HCT116 (cell line): ENCODE measurements at regions of chr2 and their contacts with region 1.

Region 1: DNA sequence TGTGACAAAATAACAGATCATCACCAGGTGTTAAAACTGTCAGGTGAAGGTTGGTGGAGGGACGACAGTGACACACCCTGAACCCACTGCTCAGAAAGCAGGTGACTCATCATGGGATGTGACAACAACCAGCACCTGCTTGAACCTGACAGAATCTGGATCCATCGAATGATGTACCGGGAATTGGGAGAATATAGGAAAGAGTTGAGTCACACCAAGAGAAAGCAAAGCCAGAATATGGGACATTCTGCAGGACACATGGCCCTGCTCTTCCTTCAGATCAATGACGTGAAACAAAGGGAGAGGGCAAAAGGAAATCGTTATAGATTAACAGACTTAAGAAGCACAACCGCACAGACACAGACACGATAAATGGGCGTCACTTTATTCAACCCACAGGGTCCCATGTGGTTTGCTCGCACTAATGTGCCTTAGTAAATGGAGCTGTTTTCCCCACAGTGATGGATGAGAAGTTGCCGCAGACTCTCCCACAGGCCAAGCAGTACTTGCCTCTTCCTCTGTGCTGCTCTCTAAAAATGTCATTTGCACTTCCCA is 100.1 kb downstream of the CRACDL start:
- DNase-seq: no peak
- ATAC-seq: no peak
- H3K4me3 ChIP-seq: no peak overlapping the region
- H3K27ac ChIP-seq: no peak overlapping the region
- H3K4me1 ChIP-seq: no peaks in the 10 kb centered on the region
- H3K27me3 ChIP-seq: no peaks in the 10 kb centered on the region
- CTCF ChIP-seq: no peak
- POLR2A ChIP-seq: no peak
- RAD21 ChIP-seq: no peak

Region 2: DNA sequence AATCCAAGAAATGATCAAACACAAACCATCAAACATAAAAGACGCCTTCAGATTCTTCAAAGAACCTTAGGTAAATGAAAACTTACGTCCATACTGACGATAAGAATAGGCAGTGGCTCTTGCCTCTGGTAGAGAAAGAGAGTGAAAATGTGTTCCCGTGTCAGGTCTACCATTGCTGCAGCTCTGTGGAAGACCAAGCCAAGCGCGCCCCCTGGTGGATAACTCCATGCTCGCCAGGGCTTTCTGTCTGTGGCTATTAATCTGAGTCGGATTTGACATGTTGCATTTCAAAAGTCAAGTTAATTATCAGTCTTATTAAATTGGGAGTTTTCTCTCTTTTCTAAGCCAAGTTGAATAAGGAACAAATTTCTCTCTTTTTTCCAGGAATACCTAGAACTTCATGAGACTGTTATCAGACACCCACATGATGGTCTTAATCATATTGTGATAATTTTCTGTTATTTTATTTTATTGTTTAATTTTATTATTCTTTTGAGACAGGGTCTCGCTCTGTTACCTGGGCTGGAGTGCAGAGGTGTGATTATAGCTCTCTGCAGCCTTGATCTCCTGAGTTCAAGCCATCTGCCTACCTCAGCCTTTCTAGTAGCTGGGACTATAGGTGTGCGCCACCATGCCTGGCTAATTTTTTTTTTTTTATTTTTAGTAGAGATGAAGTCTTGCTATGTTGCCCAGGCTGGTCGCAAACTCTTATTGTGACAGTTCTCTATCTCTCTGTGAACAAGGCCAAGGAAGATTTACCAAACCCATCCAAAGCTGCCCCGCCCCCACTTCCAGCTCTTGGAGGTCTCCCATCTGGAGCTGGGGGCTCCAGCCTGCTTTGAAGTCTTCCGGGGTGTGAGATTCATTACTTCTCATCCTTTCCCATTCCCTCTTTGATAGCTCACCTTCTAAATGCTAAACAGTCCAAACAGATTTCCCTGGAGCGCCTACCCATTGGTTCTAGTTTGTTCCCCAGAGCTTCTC is 1138.4 kb before region 1 on chr2:
- CTCF ChIA-PET with region 1: interaction called, 3 read pairs
- POLR2A ChIA-PET with region 1: no interaction called
- RAD21 ChIA-PET with region 1: no interaction called
- intact Hi-C with region 1: loop called (anchors 2 kb)
- DNase-seq: peak; percentile 71
- ATAC-seq: peak; percentile 85
- H3K4me3 ChIP-seq: no peak overlapping the region
- H3K27ac ChIP-seq: no peak overlapping the region
- H3K4me1 ChIP-seq: peaks cover 0 to 5% of the 10 kb centered on the region in 2 experiments; a peak in 1 of 4 replicates
- H3K27me3 ChIP-seq: no peaks in the 10 kb centered on the region
- CTCF ChIP-seq: peak; percentile 85 to 99 (median 92)
- POLR2A ChIP-seq: no peak
- RAD21 ChIP-seq: peak; percentile 100

Region 3: DNA sequence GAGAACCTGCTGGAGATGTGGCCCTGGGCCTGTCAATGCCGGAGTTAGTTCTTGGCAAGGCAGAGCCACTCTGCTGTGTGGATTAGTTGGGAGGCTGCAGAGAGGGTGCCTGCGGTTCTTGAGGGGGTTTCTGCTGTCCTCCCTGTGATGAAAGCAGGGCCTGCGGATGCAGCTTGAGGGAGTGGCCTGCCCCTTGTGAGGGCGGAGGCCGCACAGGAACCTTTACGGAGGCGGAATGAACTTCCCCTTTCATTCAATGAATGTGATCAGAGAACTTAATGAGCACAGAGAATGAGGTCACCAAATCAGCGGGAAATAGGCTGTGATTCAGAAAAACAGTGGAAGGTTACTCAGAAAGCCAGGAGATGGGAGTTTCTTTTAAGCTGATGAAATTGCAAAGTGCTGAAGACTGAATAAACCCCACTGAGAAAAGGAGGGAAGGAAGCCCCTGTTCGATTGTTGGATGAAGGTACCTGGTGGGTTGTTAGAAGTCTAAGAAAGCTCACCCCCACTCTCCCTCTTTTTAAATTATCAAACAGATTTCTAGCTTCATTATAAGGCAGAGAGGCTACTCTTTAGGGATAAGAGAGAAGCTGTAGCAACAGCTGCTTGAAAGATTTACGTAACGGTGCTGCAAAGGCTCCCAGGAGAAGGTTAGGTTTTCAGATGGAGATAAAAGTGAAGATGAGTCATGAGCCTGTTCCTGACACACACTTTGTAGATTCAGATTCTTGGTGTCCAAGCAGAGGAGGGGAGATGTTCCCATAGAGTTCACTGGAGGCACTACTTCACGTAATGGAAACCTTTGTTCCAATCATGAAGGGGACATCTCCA is 701.5 kb before region 1 on chr2:
- CTCF ChIA-PET with region 1: no interaction called
- POLR2A ChIA-PET with region 1: no interaction called
- RAD21 ChIA-PET with region 1: no interaction called
- intact Hi-C with region 1: no loop called
- DNase-seq: no peak
- ATAC-seq: no peak
- H3K4me3 ChIP-seq: no peak overlapping the region
- H3K27ac ChIP-seq: no peak overlapping the region
- H3K4me1 ChIP-seq: no peaks in the 10 kb centered on the region
- H3K27me3 ChIP-seq: no peaks in the 10 kb centered on the region
- CTCF ChIP-seq: no peak
- POLR2A ChIP-seq: no peak
- RAD21 ChIP-seq: no peak

Region 4: GRCh38 chr2:98412751-98413458 is 423.0 kb before region 1 on chr2:
- CTCF ChIA-PET with region 1: no interaction called
- POLR2A ChIA-PET with region 1: no interaction called
- RAD21 ChIA-PET with region 1: no interaction called
- intact Hi-C with region 1: loop called (anchors 2 kb)
- DNase-seq: peak; percentile 53
- ATAC-seq: peak; percentile 96
- H3K4me3 ChIP-seq: no peak overlapping the region
- H3K27ac ChIP-seq: no peak overlapping the region
- H3K4me1 ChIP-seq: peaks cover 0 to 3% of the 10 kb centered on the region in 2 experiments; a peak in 1 of 4 replicates
- H3K27me3 ChIP-seq: no peaks in the 10 kb centered on the region
- CTCF ChIP-seq: peak; percentile 70 to 76 (median 74); a peak in 5 of 6 replicates
- POLR2A ChIP-seq: no peak
- RAD21 ChIP-seq: peak; percentile 75

Region 5: DNA sequence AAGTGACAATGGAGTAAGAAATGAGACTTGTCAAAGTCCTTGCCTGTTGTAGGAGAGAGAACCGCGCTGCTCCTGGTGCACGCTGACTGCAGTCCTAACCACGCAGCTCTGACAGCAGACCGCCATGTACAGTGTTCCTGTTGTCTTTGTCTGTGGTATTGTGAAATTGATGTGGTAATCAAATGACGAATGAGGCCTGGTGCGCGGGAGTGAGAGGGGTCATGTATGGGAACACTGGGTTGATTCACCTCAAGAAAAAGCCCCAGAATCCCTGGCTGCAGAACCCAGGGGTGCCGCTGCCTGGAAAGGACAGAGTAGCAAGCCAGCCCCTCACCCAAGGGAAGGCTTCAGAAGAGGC is 327.2 kb before region 1 on chr2:
- CTCF ChIA-PET with region 1: no interaction called
- POLR2A ChIA-PET with region 1: no interaction called
- RAD21 ChIA-PET with region 1: no interaction called
- intact Hi-C with region 1: no loop called
- DNase-seq: no peak
- ATAC-seq: no peak
- H3K4me3 ChIP-seq: no peak overlapping the region
- H3K27ac ChIP-seq: no peak overlapping the region
- H3K4me1 ChIP-seq: no peaks in the 10 kb centered on the region
- H3K27me3 ChIP-seq: no peaks in the 10 kb centered on the region
- CTCF ChIP-seq: no peak
- POLR2A ChIP-seq: no peak
- RAD21 ChIP-seq: no peak

Region 6: DNA sequence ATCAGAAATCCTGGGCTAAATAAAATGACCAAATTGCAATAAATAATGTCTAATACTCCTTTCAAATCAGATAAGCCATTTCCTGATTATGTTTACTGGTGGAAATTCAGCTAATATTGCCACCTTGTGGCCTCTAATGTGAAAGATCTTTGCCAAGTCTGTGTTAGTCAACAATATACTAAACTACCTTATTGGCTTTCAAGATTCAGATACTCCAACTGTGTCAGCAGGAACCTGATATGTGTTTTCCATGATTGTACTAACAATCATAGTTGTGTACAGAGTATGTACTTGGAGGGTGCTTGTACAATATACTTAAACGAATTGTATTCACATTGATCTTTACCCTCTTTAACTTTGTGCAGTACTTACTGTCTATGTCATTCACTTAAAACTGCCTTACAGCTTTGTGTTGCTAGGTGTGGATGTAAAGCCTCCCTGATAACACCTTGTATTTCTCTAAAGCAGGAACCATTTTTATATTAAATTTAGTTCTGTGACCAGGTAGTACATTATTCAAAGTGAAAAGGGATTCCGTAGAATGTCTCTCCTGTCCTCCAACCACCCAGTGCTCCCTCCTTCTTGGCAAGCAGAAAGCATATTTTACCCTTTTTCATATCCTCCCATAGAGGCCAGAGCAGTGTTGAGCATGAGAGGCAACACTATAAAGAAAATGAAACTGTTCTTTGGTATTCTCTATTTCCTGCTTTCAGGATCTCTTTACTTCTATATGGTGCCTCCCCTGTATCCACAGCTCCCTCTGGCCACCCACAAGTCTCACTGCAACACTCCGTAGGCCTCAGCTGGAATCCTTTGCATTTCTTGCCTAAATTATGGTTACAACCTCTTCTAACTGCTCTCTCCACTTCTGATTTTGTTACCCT is 230.4 kb after region 1 on chr2:
- CTCF ChIA-PET with region 1: interaction called, 3 read pairs
- POLR2A ChIA-PET with region 1: no interaction called
- RAD21 ChIA-PET with region 1: no interaction called
- intact Hi-C with region 1: loop called (anchors 2 kb)
- DNase-seq: peak; percentile 44
- ATAC-seq: peak; percentile 95
- H3K4me3 ChIP-seq: no peak overlapping the region
- H3K27ac ChIP-seq: no peak overlapping the region
- H3K4me1 ChIP-seq: no peaks in the 10 kb centered on the region
- H3K27me3 ChIP-seq: no peaks in the 10 kb centered on the region
- CTCF ChIP-seq: peak; percentile 43 to 68 (median 65)
- POLR2A ChIP-seq: no peak
- RAD21 ChIP-seq: peak; percentile 80